Activated CD8-positive, alpha-beta T cell treated with anti-CD3 and anti-CD28 coated beads, Interleukin-2, amount 10 ng/mL, durations not matched to agents 7 days and 5 days (primary cell): ENCODE measurements at regions of chr10 and their contacts with region 1.

Region 1: GRCh38 chr10:89217057-89217990 is 10.2 kb upstream of the CH25H start:
- DNase-seq: peak; percentile 81
- ATAC-seq: peak; percentile 55
- H3K4me3 Mint-ChIP-seq: no peak overlapping the region
- H3K27ac Mint-ChIP-seq: no peak overlapping the region
- H3K4me1 Mint-ChIP-seq: peaks cover 8% of the 10 kb centered on the region
- H3K27me3 Mint-ChIP-seq: peaks cover 2% of the 10 kb centered on the region

Region 2: GRCh38 chr10:88944813-88945212 is 272.5 kb before region 1 on chr10:
- CTCF ChIA-PET with region 1: interaction called, 11 read pairs
- POLR2A ChIA-PET with region 1: no interaction called
- DNase-seq: no peak
- ATAC-seq: no peak
- H3K4me3 Mint-ChIP-seq: no peak overlapping the region
- H3K27ac Mint-ChIP-seq: no peak overlapping the region
- H3K4me1 Mint-ChIP-seq: peaks cover 11% of the 10 kb centered on the region
- H3K27me3 Mint-ChIP-seq: no peaks in the 10 kb centered on the region

Region 3: DNA sequence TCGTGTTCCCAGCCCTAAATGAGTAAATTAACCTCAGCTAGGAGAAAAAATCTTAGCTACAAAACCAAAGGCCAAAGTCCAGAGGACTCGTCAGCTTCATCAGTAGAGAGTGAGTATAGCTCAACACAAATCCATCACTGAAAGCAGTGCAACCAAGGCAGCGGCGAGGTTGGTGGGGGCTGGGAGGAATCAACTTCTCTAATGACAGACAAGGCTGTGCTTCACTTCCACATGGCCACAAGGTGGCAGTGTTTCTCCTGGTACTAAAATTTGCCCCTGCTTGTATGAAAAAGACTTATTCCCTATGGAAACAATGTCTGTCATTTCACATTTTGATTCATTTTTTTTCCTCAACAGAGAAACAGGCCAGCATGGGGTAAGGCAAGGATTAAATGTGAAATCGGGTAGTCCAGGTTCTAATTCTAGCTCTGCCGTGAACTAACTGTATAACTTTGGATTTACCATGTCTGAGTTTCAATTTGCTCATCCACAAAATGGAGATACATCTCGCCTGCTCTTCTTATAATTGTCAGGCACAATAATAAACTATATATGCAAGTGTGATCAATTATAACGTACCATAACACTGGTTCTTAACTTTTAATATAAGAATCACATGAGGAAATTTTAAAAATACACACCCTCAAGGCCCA is 187.4 kb before region 1 on chr10:
- CTCF ChIA-PET with region 1: interaction called, 94 read pairs
- POLR2A ChIA-PET with region 1: no interaction called
- DNase-seq: peak; percentile 85
- ATAC-seq: peak; percentile 75
- H3K4me3 Mint-ChIP-seq: no peak overlapping the region
- H3K27ac Mint-ChIP-seq: no peak overlapping the region
- H3K4me1 Mint-ChIP-seq: peaks cover 15% of the 10 kb centered on the region
- H3K27me3 Mint-ChIP-seq: no peaks in the 10 kb centered on the region

Region 4: GRCh38 chr10:89207181-89207800 is 10.0 kb before region 1 on chr10 and contains the start of gene CH25H:
- CTCF ChIA-PET with region 1: interaction called, 23 read pairs
- POLR2A ChIA-PET with region 1: no interaction called
- DNase-seq: peak; percentile 53
- ATAC-seq: peak; percentile 76
- H3K4me3 Mint-ChIP-seq: peak within 1 kb of the TSS; percentile 65
- H3K27ac Mint-ChIP-seq: peak within 1 kb of the TSS; percentile 32
- H3K4me1 Mint-ChIP-seq: peaks cover 23% of the 10 kb centered on the region
- H3K27me3 Mint-ChIP-seq: peaks cover 38% of the 10 kb centered on the region
- total RNA-seq, gene CH25H: not detected

Region 5: GRCh38 chr10:89251409-89252224 is 34.3 kb after region 1 on chr10 and contains the start of gene LIPA:
- CTCF ChIA-PET with region 1: interaction called, 17 read pairs
- POLR2A ChIA-PET with region 1: no interaction called
- DNase-seq: peak; percentile 97
- ATAC-seq: peak; percentile 100
- H3K4me3 Mint-ChIP-seq: peak within 1 kb of the TSS; percentile 88
- H3K27ac Mint-ChIP-seq: peak within 1 kb of the TSS; percentile 39
- H3K4me1 Mint-ChIP-seq: peaks cover 23% of the 10 kb centered on the region
- H3K27me3 Mint-ChIP-seq: no peaks in the 10 kb centered on the region
- total RNA-seq, gene LIPA: 23.5 to 29.2 TPM